CD8-positive, alpha-beta T cell (primary cell): ENCODE measurements at regions of chr14 and their contacts with region 1.

Region 1: GRCh38 chr14:73458151-73458976 is at the start of gene NUMB:
- DNase-seq: peak; percentile 90 to 99 (median 95)
- ATAC-seq: peak; percentile 96
- H3K4me3 ChIP-seq: peak within 1 kb of the TSS; percentile 67 to 98
- H3K4me3 Mint-ChIP-seq: peak within 1 kb of the TSS; percentile 100
- H3K27ac ChIP-seq: peak within 1 kb of the TSS; percentile 49 to 64
- H3K27ac Mint-ChIP-seq: peak within 1 kb of the TSS; percentile 97
- H3K4me1 ChIP-seq: peaks cover 27% of the 10 kb centered on the region
- H3K4me1 Mint-ChIP-seq: peaks cover 41% of the 10 kb centered on the region
- H3K27me3 ChIP-seq: no peaks in the 10 kb centered on the region
- H3K27me3 Mint-ChIP-seq: no peaks in the 10 kb centered on the region
- CTCF ChIP-seq: no peak
- total RNA-seq, gene NUMB: 21.8 to 22.0 TPM

Region 2: DNA sequence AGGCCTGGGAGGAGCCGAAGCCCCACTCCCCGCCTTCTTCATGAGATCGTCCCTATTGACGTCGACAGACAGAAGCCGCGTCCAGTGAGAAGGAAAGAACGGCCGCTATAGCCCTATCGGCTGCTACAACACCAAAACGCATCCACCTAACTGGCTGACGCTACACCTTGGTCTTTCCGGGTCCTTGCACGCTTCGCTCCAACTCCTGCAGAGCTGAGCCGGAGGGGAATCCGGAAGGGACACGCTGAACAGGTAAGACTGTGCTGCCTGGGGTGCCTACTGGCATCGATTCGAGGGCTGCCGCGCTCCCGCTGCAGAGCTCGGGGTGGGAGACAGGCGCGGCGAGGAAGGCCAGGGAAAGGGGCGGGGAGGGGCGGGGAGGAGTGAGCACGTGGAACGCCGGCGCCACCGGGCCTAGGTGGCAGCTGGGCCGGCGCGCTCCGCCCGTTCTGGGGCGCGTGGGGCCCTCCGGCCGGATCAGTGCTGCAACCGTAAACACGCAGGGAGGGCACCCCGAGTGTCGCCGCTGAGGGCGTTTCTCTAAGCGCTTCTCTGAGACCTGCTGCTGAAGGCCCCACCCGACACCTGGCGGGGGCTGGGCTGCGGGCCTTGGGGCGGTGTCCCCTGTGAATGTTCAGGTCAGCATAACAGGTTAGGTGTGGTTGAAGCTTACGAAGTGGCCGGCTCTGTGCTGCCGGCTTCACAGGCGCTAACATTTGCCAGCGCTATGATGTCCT is 531.9 kb before region 1 on chr14 and contains the start of gene DCAF4:
- CTCF ChIA-PET with region 1: no interaction called
- POLR2A ChIA-PET with region 1: no interaction called
- intact Hi-C with region 1: loop called in 1 of 2 experiments (anchors 5 kb)
- DNase-seq: peak; percentile 89 to 97 (median 93)
- ATAC-seq: peak; percentile 93
- H3K4me3 ChIP-seq: peak within 1 kb of the TSS; percentile 79 to 87
- H3K4me3 Mint-ChIP-seq: peak within 1 kb of the TSS; percentile 94
- H3K27ac ChIP-seq: peak within 1 kb of the TSS; percentile 67 to 76
- H3K27ac Mint-ChIP-seq: peak within 1 kb of the TSS; percentile 92
- H3K4me1 ChIP-seq: peaks cover 13% of the 10 kb centered on the region
- H3K4me1 Mint-ChIP-seq: peaks cover 15% of the 10 kb centered on the region
- H3K27me3 ChIP-seq: no peaks in the 10 kb centered on the region
- H3K27me3 Mint-ChIP-seq: peaks cover 2% of the 10 kb centered on the region
- CTCF ChIP-seq: no peak
- total RNA-seq, gene DCAF4: 21.9 to 26.6 TPM

Region 3: GRCh38 chr14:73026845-73027542 is 431.4 kb before region 1 on chr14 and contains the start of gene ZFYVE1:
- CTCF ChIA-PET with region 1: no interaction called
- POLR2A ChIA-PET with region 1: no interaction called
- intact Hi-C with region 1: loop called in 1 of 2 experiments (anchors 5 kb)
- DNase-seq: peak; percentile 80 to 96 (median 91)
- ATAC-seq: peak; percentile 99
- H3K4me3 ChIP-seq: peak within 1 kb of the TSS; percentile 62 to 83
- H3K4me3 Mint-ChIP-seq: peak within 1 kb of the TSS; percentile 92
- H3K27ac ChIP-seq: peak within 1 kb of the TSS; percentile 48 to 52
- H3K27ac Mint-ChIP-seq: peak within 1 kb of the TSS; percentile 87
- H3K4me1 ChIP-seq: peaks cover 11% of the 10 kb centered on the region
- H3K4me1 Mint-ChIP-seq: peaks cover 45% of the 10 kb centered on the region
- H3K27me3 ChIP-seq: no peaks in the 10 kb centered on the region
- H3K27me3 Mint-ChIP-seq: no peaks in the 10 kb centered on the region
- CTCF ChIP-seq: no peak
- total RNA-seq, gene ZFYVE1: 10.0 to 11.3 TPM

Region 4: GRCh38 chr14:73136387-73137225 is 321.8 kb before region 1 on chr14 and contains the start of gene PSEN1:
- CTCF ChIA-PET with region 1: no interaction called
- POLR2A ChIA-PET with region 1: interaction called, 6 read pairs
- intact Hi-C with region 1: loop called in 1 of 2 experiments (anchors 1 kb)
- DNase-seq: peak; percentile 98 to 100 (median 99)
- ATAC-seq: peak; percentile 96
- H3K4me3 ChIP-seq: peak within 1 kb of the TSS; percentile 84 to 92
- H3K4me3 Mint-ChIP-seq: peak within 1 kb of the TSS; percentile 97
- H3K27ac ChIP-seq: peak within 1 kb of the TSS; percentile 91 to 93
- H3K27ac Mint-ChIP-seq: peak within 1 kb of the TSS; percentile 99
- H3K4me1 ChIP-seq: peaks cover 17% of the 10 kb centered on the region
- H3K4me1 Mint-ChIP-seq: peaks cover 31% of the 10 kb centered on the region
- H3K27me3 ChIP-seq: no peaks in the 10 kb centered on the region
- H3K27me3 Mint-ChIP-seq: no peaks in the 10 kb centered on the region
- CTCF ChIP-seq: no peak
- total RNA-seq, gene PSEN1: 24.2 to 24.4 TPM

Region 5: GRCh38 chr14:73491256-73492042 is 33.1 kb after region 1 on chr14:
- CTCF ChIA-PET with region 1: no interaction called
- POLR2A ChIA-PET with region 1: interaction called, 18 read pairs
- intact Hi-C with region 1: loop called (anchors 1 kb)
- DNase-seq: peak in 8 of 9 experiments; percentile 31 to 86 (median 68)
- ATAC-seq: peak; percentile 72
- H3K4me3 ChIP-seq: peak overlapping the region; percentile 63 to 68
- H3K4me3 Mint-ChIP-seq: peak overlapping the region; percentile 86
- H3K27ac ChIP-seq: peak overlapping the region; percentile 66 to 78
- H3K27ac Mint-ChIP-seq: peak overlapping the region; percentile 91
- H3K4me1 ChIP-seq: peaks cover 37% of the 10 kb centered on the region
- H3K4me1 Mint-ChIP-seq: peaks cover 50% of the 10 kb centered on the region
- H3K27me3 ChIP-seq: no peaks in the 10 kb centered on the region
- H3K27me3 Mint-ChIP-seq: no peaks in the 10 kb centered on the region
- CTCF ChIP-seq: no peak

Region 6: DNA sequence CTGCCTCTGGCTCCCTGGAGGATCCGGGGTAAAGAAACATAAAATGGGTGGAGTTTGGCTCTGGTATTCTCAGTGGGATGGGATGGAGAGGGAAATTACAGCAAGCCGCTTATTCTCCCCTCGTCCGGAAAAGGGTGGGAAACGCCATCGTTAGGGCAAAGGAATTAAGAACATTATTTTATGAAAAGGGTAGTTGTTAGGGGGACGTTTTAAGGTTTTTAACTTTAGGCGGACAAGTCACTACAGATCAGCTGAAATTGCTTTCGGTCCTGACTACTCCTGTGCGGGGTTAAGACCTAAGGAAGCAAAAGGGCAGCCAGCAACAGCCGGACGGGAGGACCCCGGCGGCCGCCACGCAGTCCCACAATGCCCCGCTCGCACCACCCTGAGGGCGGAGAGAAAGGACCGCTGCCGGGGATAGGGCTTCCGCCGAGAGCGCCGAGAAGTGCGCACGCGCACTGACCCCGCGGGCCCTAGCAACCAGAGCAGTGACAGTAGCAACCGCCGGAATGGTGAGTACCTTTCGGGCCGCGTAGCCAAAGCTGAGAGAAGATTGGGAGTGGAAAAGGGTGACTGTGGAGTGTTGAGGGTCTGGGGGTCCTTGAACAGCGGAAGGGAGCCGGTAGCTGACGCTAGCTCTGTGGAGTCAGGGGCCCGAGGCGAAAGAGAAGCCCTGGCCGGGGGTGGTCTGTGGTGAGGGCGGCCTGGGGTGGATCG is 186.3 kb after region 1 on chr14 and contains the start of gene DNAL1:
- CTCF ChIA-PET with region 1: no interaction called
- POLR2A ChIA-PET with region 1: no interaction called
- intact Hi-C with region 1: loop called in 1 of 2 experiments (anchors 2 kb)
- DNase-seq: peak; percentile 83 to 94 (median 90)
- ATAC-seq: peak; percentile 97
- H3K4me3 ChIP-seq: peak within 1 kb of the TSS; percentile 67 to 72
- H3K4me3 Mint-ChIP-seq: peak within 1 kb of the TSS; percentile 89
- H3K27ac ChIP-seq: peak within 1 kb of the TSS; percentile 61 to 76
- H3K27ac Mint-ChIP-seq: peak within 1 kb of the TSS; percentile 85
- H3K4me1 ChIP-seq: peaks cover 15% of the 10 kb centered on the region
- H3K4me1 Mint-ChIP-seq: peaks cover 17% of the 10 kb centered on the region
- H3K27me3 ChIP-seq: no peaks in the 10 kb centered on the region
- H3K27me3 Mint-ChIP-seq: no peaks in the 10 kb centered on the region
- CTCF ChIP-seq: no peak
- total RNA-seq, gene DNAL1: 2.8 to 3.3 TPM

Region 7: GRCh38 chr14:73713803-73714655 is 255.7 kb after region 1 on chr14 and contains the start of gene PNMA1:
- CTCF ChIA-PET with region 1: no interaction called
- POLR2A ChIA-PET with region 1: interaction called, 4 read pairs
- intact Hi-C with region 1: loop called in 1 of 2 experiments (anchors 1 kb)
- DNase-seq: peak; percentile 67 to 94 (median 87)
- ATAC-seq: peak; percentile 72
- H3K4me3 ChIP-seq: peak within 1 kb of the TSS; percentile 71 to 92
- H3K4me3 Mint-ChIP-seq: peak within 1 kb of the TSS; percentile 92
- H3K27ac ChIP-seq: peak within 1 kb of the TSS; percentile 76 to 77
- H3K27ac Mint-ChIP-seq: peak within 1 kb of the TSS; percentile 96
- H3K4me1 ChIP-seq: peaks cover 10% of the 10 kb centered on the region
- H3K4me1 Mint-ChIP-seq: peaks cover 34% of the 10 kb centered on the region
- H3K27me3 ChIP-seq: no peaks in the 10 kb centered on the region
- H3K27me3 Mint-ChIP-seq: no peaks in the 10 kb centered on the region
- CTCF ChIP-seq: no peak
- total RNA-seq, gene PNMA1: 39.4 to 39.8 TPM

Region 8: DNA sequence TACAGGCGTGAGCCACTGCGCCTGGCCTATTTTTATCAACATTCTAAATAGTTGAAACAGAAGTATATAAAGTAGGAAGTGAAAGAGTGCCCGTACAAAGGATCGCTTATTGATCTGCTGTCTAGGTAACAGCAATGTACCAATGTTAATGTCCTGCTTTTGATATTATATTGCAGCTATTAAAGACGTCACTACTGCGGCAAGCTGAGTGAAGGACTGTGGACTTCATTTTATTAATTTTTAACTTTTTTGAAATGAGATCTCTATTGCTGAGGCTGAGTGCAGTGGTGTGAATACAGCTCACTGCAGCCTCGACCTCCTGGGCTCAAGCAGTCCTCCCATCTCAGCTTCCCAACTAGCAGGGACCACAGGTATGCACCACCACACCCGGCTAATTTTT is 404.1 kb after region 1 on chr14:
- CTCF ChIA-PET with region 1: no interaction called
- POLR2A ChIA-PET with region 1: no interaction called
- intact Hi-C with region 1: no loop called
- DNase-seq: no peak
- ATAC-seq: no peak
- H3K4me3 ChIP-seq: no peak overlapping the region
- H3K4me3 Mint-ChIP-seq: no peak overlapping the region
- H3K27ac ChIP-seq: no peak overlapping the region
- H3K27ac Mint-ChIP-seq: no peak overlapping the region
- H3K4me1 ChIP-seq: no peaks in the 10 kb centered on the region
- H3K4me1 Mint-ChIP-seq: no peaks in the 10 kb centered on the region
- H3K27me3 ChIP-seq: no peaks in the 10 kb centered on the region
- H3K27me3 Mint-ChIP-seq: no peaks in the 10 kb centered on the region
- CTCF ChIP-seq: no peak